AG04449 (cell line): ENCODE measurements at regions of chr5 and their contacts with region 1.

Region 1: DNA sequence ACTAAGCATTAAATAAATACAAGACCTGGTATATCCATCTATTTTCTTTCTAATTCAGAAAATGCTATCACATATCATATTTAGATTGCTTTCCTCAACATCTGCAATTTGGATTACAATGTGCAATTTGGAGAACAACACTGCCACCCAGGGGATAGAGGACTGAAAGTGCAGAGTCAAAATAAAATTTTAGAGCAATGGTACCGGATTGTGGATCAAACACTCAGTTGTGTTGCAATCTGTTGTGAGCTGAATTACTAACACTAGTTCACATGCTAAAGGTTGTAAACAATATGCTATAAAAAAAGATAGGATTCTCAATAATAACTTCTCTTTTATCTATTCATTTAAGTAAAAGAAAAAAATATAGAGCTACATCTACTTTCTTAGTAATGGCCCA is 11.9 kb upstream of the SRFBP1 start:
- DNase-seq: no peak
- H3K4me3 ChIP-seq: no peak overlapping the region
- CTCF ChIP-seq: peak; percentile 46

Region 2: DNA sequence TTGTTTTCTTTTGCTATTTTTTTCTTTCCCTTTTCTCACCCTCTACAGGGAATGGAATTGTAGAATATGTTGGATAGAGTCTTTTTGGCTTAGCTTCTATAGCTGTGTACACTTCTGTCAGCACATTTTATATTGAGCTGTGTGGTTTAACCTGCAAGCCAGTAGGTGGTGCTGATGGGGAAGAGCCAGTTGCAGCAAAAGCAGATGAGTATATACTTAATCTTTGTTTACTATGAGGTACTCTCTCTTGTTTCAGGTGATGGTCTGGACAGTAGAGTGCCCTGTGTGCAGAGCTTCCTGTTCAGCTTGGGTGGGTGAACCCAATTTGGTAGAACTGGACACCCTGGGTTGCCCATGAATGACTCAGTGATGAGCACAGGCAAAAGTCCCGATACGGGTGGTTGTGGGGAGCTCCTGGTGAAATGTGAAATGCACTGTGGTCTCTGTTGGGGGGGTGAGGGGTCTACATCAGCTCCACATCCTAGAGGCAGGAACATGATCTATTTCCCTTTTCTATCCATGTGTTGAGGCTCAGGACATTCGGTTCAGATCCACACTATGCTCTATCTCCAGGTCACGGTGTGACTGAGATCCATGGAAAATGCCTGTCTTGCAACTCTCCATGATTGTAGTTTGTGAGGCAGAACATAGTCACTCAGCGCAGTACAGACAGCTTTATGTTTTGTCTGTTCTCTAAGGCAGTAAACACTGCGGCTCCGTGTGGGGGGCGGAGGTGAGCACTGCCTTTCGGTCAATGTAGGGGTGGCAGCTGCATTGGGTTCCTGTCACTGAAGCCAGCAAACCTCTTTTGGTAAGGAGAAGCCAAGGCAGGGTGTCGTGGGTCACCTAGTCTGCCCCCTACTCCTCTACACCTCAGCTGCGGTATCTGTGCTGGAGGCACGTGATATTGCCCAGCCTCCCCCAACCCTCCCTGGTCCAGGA is 1132.6 kb before region 1 on chr5:
- CTCF ChIA-PET with region 1: interaction called, 13 read pairs
- POLR2A ChIA-PET with region 1: no interaction called
- DNase-seq: no peak
- H3K4me3 ChIP-seq: no peak overlapping the region
- CTCF ChIP-seq: peak; percentile 40

Region 3: DNA sequence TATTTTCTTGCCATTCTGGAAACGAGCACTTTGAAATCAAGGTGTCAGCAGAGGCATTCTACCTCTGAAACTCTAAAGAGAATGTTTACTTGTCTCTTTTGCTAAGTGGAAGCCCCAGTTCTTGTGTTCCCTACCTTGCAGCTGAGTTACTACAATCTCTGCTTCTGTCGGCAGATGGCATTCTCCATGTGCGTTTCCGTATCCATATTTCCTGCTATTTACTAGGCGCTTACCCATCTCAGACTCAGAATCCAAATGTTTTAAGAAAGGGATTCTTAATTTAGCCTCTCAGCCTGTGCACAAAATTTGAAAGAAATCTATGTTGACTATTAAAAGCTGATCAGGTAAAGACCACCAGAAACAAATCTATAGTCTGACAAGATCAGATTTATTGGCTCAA is 319.5 kb before region 1 on chr5:
- CTCF ChIA-PET with region 1: interaction called, 14 read pairs
- POLR2A ChIA-PET with region 1: no interaction called
- DNase-seq: no peak
- H3K4me3 ChIP-seq: no peak overlapping the region
- CTCF ChIP-seq: no peak

Region 4: DNA sequence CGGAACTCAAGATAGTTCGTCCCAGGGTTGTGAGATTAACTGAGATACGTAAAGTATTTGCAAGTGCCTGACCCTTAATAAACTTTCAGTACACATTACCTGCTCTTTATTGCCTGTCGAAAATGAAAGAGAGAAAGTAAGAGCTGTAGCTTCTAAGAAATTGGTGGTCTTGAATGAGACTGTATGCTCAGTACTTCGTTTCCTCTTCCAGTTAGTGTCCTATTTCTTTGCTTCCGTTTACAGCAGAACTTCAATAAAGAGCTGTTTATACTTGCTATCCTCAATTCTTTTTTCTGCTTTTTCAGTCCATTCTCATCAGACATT is 12.4 kb after region 1 on chr5:
- CTCF ChIA-PET with region 1: interaction called, 24 read pairs
- POLR2A ChIA-PET with region 1: no interaction called
- DNase-seq: no peak
- H3K4me3 ChIP-seq: peak overlapping the region; percentile 99
- CTCF ChIP-seq: no peak